ENCODE measurements at regions of chr1 and their contacts with region 1.

Region 1: DNA sequence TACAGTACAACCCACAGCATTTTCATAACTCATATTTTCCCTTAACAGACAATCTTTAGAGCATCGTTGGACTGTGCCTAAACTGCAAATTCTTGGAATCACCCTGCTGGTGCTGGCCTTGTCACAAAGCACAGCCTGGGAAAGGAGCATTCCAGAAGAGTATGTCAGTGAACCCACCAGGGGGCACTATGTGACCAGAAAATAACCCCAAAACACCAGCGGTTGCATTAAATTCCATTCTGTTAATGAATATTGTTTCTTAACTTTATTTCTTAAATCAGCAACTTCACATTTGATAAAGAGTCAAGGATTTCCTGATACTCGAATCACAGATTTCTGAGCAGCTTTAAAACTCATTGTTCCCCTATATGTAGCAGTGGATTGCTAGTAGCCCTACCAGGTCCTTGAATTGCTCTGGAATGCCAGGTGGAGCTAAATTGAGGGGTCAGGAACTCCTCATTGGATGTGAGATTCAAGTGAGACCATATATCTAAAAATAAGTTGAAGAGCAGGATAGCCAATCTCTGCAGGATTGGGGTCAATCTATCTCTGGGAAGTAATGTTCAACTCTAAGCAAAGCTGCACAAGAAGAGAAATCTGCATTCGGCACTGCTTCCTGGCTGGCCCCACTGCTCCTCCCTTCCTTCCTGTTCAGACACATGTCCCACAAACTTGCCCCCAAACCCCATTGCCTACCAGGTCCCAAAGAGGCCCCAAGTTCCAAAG is 12.7 kb upstream of the RAB4A start:
- DNase-seq: peak; percentile 80

Region 2: DNA sequence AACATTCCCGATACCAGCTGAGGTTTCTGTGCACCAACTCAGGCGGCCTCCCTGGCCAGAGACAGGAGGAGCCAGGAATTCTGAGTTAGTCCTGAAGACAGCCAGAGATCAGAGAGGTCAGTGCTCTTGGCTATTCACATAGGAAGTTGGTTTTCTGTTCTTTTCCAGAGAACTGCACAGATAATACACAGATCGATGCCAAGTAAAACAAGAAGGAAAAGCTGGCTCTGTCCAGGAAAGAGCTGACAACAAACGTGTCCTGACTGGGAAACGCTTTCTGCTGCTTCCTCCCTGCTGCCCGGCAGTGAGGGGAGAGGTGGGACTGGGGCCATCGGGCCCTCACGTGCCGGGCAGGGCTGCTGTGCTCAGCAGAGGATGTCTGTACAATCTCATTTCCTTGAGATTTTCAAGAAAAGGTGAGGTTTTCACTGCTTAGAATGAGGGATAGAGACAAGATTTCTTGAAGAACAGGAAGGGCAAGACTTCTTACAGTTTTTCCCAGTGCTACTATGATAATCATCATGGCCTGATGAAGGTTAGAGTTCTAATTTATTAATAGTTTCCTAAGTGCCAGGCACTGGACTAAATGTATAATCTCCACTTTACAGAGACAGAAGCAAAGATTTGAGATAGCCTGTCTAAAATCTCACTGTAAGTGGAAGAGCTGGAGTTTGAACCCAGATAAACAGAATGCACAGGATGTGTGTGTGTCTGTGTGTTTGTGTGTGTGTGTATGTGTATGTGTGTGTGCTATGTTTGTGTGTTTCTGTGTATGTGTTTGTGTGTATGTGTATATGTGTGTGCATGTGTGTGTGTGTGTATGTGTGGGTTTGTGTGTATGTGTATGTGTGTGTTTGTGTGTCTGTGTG is 198.3 kb before region 1 on chr1:
- CTCF ChIA-PET with region 1: no interaction called
- POLR2A ChIA-PET with region 1: no interaction called
- DNase-seq: no peak

Region 3: DNA sequence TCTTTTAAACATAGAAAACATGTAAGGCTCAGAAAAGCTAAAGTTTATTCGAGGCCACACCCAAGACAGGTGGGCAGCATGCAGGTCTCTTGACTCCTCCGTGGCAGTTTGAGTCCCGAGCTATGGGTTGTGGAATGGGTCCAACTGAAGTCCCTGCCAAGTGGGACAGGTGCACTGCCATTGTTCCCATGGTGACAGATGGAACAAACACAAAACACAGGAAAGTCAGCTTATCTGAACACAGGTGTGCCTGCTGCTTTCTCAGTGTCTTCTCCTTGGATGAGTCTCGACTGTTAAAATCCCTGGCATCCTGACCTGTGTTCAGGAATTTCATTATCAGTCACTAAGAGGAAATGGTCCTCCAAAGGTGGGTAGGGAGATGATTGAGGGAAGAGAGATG is 86.3 kb before region 1 on chr1:
- CTCF ChIA-PET with region 1: no interaction called
- POLR2A ChIA-PET with region 1: no interaction called
- DNase-seq: no peak

Region 4: DNA sequence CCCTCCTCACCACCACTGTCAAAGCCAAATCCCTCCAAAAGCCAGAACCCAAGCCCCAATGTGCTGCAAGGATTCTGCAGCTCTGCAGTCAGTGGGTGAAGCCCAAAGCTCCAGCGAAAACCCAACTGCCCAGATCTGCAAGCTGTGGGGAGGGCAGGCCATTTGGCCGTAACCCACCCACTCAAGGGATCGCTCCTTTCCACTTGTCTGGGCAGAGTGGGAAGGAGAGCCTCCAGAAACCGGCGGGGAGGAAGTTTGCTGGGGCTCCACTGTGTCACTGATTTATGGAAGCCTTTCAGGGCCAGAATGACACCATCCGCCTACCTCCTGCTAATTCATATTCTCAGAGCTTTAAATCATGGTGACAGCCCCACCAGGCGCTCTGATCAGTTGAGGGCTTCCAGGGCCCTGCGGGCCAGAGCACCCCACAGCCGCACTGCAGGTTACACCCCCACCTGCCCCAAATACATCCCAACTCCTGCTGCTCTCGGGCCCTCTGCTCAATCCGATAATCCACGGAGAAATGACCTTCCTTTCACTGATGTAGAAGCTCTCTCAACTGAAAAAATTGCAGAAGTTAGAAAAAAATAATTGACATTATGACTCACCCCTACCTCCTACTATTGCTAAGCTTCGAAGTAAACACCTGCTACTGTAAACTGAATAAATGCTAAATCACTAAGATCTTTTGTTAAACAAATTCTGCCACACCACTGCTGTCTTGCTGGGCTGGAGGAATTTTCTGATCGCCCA is 27.9 kb before region 1 on chr1:
- CTCF ChIA-PET with region 1: interaction called, 18 read pairs
- POLR2A ChIA-PET with region 1: interaction called, 3 read pairs
- DNase-seq: no peak

Region 5: GRCh38 chr1:229482511-229482910 is 224.3 kb after region 1 on chr1:
- CTCF ChIA-PET with region 1: interaction called, 15 read pairs
- POLR2A ChIA-PET with region 1: no interaction called
- DNase-seq: no peak

Region 6: GRCh38 chr1:229514578-229515275 is 256.5 kb after region 1 on chr1:
- CTCF ChIA-PET with region 1: interaction called, 10 read pairs
- POLR2A ChIA-PET with region 1: no interaction called
- DNase-seq: peak; percentile 79